SK-N-SH (cell line): ENCODE measurements at regions of chr1 and their contacts with region 1.

Region 1: DNA sequence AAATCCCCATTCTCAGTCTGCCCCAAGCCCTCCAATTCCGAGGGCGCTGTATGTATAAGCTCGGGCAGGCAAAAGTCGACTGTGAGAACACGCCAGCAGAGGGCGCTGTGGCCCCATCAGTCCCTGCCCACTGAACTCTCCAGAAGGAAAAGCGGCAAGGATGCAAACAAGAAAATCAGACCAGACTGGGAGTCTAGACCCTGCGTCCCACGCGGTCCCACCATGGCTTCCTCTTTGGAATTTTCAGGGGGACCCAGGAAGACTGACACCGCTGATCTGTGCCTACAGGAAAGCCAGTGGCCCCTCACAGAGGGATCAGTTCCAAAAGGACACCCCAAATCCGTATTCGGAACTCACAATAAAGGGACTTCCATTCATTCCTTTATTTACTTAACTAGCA is 19.5 kb downstream of the TEX35 start:
- DNase-seq: peak; percentile 84
- H3K4me3 ChIP-seq: peak overlapping the region in 1 of 2 experiments; percentile 18; a peak in 1 of 4 replicates
- H3K27ac ChIP-seq: no peak overlapping the region
- H3K4me1 ChIP-seq: peaks cover 20 to 21% of the 10 kb centered on the region in 2 experiments; a peak in 3 of 4 replicates
- H3K27me3 ChIP-seq: no peaks in the 10 kb centered on the region
- CTCF ChIP-seq: peak; percentile 95
- EP300 ChIP-seq: no peak
- RAD21 ChIP-seq: peak; percentile 85

Region 2: GRCh38 chr1:178324003-178324402 is 208.4 kb before region 1 on chr1:
- CTCF ChIA-PET with region 1: interaction called, 10 read pairs
- POLR2A ChIA-PET with region 1: no interaction called
- DNase-seq: no peak
- H3K4me3 ChIP-seq: no peak overlapping the region
- H3K27ac ChIP-seq: no peak overlapping the region
- H3K4me1 ChIP-seq: no peaks in the 10 kb centered on the region
- H3K27me3 ChIP-seq: no peaks in the 10 kb centered on the region
- CTCF ChIP-seq: no peak
- EP300 ChIP-seq: no peak
- RAD21 ChIP-seq: no peak

Region 3: GRCh38 chr1:178438432-178438831 is 94.0 kb before region 1 on chr1:
- CTCF ChIA-PET with region 1: no interaction called
- POLR2A ChIA-PET with region 1: no interaction called
- DNase-seq: no peak
- H3K4me3 ChIP-seq: no peak overlapping the region
- H3K27ac ChIP-seq: no peak overlapping the region
- H3K4me1 ChIP-seq: no peaks in the 10 kb centered on the region; a peak in 1 of 4 replicates
- H3K27me3 ChIP-seq: no peaks in the 10 kb centered on the region
- CTCF ChIP-seq: no peak
- EP300 ChIP-seq: no peak
- RAD21 ChIP-seq: no peak

Region 4: DNA sequence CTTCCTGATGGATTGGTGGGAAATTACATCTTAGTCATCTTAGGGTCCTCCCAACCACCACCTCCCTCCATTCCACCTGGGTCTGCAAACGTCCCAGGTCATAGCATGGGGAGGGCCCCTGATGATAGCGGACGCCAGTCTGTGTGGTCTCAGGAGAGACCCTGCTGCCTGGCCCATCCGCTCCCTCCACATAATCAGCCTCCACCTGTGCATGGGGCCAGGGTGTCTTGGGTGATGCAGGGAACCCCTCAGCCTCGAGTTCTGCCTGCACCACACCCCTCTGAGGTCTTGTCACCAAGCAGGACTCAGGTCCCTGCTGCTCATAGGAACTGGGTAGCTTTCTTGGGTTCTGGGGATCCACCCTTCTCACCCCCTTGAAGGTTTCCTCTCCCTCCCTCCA is 10.5 kb before region 1 on chr1:
- CTCF ChIA-PET with region 1: interaction called, 13 read pairs
- POLR2A ChIA-PET with region 1: no interaction called
- DNase-seq: no peak
- H3K4me3 ChIP-seq: no peak overlapping the region
- H3K27ac ChIP-seq: no peak overlapping the region
- H3K4me1 ChIP-seq: no peaks in the 10 kb centered on the region
- H3K27me3 ChIP-seq: no peaks in the 10 kb centered on the region
- CTCF ChIP-seq: no peak
- EP300 ChIP-seq: no peak
- RAD21 ChIP-seq: no peak

Region 5: DNA sequence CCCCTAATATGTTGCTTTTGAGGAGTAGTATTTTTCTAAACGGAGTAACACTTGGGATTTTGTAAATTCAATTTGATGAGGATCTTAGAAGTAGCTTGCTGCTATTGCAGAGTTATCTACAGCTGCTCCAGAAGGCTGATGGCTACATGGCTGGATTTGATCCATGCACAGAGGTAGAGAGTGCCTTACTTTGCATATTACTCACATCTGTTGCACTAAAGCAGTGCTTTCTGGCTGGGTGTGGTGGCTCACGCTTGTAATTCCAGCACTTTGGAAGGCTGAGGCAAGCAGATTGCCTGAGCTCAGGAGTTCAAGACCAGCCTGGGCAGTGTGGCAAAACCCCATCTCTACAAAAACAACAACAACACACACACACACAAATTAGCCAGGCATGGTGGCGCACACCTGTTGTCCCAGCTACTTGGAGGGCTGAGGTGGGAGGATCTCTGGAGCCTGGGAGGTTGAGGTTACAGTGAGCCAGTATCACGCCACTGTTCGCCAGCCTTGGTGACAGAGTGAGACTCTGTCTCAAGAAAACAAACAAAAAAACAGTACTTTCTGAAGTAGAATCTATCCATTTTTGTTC is 217.3 kb after region 1 on chr1:
- CTCF ChIA-PET with region 1: interaction called, 36 read pairs
- POLR2A ChIA-PET with region 1: no interaction called
- DNase-seq: no peak
- H3K4me3 ChIP-seq: no peak overlapping the region
- H3K27ac ChIP-seq: no peak overlapping the region
- H3K4me1 ChIP-seq: no peaks in the 10 kb centered on the region; a peak in 1 of 4 replicates
- H3K27me3 ChIP-seq: no peaks in the 10 kb centered on the region
- CTCF ChIP-seq: no peak
- EP300 ChIP-seq: no peak
- RAD21 ChIP-seq: no peak